ENCODE measurements at regions of chr18 and their contacts with region 1.

Region 1: DNA sequence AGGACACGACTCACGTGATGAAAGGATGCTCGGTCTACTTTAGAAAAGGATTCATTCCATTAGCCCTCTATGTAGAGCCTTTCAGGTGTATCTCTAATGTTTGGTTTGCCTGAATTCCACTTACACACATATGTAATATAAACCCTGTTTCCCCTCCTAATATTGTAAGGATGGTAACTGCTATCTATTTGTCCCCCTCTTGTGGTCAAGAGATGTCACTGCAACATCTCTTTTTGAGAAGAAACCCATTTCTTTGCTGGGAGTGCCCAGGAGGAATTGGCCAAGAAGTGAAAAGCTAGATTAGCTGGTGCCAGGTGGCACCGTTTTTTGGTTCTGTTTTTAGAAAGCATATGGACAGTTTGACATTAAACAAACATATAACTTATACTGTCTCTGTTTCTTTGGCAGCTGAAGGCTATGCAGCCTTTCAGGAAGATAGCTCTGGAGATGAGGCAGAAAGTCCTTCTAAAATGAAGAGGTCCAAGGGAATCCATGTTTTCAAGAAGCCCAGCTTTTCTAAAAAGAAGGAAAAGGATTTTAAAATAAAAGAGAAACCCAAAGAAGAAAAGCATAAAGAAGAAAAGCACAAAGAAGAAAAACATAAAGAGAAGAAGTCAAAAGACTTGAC is 41.2 kb downstream of the RALBP1 start:
- DNase-seq: peak in 1 of 2 experiments; percentile 32
- H3K4me3 ChIP-seq: no peak overlapping the region
- H3K4me3 Mint-ChIP-seq: no peak overlapping the region
- H3K27ac Mint-ChIP-seq: no peak overlapping the region
- H3K4me1 ChIP-seq: peaks cover 31% of the 10 kb centered on the region
- H3K4me1 Mint-ChIP-seq: peaks cover 15% of the 10 kb centered on the region
- H3K27me3 ChIP-seq: no peaks in the 10 kb centered on the region
- H3K27me3 Mint-ChIP-seq: no peaks in the 10 kb centered on the region
- CTCF ChIP-seq: peak; percentile 82 to 85

Region 2: GRCh38 chr18:9066817-9067306 is 449.7 kb before region 1 on chr18:
- CTCF ChIA-PET with region 1: no interaction called
- POLR2A ChIA-PET with region 1: no interaction called
- intact Hi-C with region 1: loop called (anchors 2 kb)
- DNase-seq: no peak
- H3K4me3 ChIP-seq: no peak overlapping the region
- H3K4me3 Mint-ChIP-seq: no peak overlapping the region
- H3K27ac Mint-ChIP-seq: no peak overlapping the region
- H3K4me1 ChIP-seq: no peaks in the 10 kb centered on the region; the same call in 1 of the 2 replicates
- H3K4me1 Mint-ChIP-seq: peaks cover 14% of the 10 kb centered on the region
- H3K27me3 ChIP-seq: no peaks in the 10 kb centered on the region
- H3K27me3 Mint-ChIP-seq: no peaks in the 10 kb centered on the region
- CTCF ChIP-seq: no peak

Region 3: GRCh38 chr18:9287036-9287435 is 229.5 kb before region 1 on chr18:
- CTCF ChIA-PET with region 1: no interaction called
- POLR2A ChIA-PET with region 1: interaction called, 3 read pairs
- intact Hi-C with region 1: loop called (anchors 10 kb)
- DNase-seq: no peak
- H3K4me3 ChIP-seq: no peak overlapping the region
- H3K4me3 Mint-ChIP-seq: no peak overlapping the region
- H3K27ac Mint-ChIP-seq: no peak overlapping the region
- H3K4me1 ChIP-seq: no peaks in the 10 kb centered on the region
- H3K4me1 Mint-ChIP-seq: no peaks in the 10 kb centered on the region
- H3K27me3 ChIP-seq: no peaks in the 10 kb centered on the region
- H3K27me3 Mint-ChIP-seq: no peaks in the 10 kb centered on the region
- CTCF ChIP-seq: no peak

Region 4: GRCh38 chr18:9366192-9366591 is 150.4 kb before region 1 on chr18:
- CTCF ChIA-PET with region 1: no interaction called
- POLR2A ChIA-PET with region 1: no interaction called
- intact Hi-C with region 1: loop called (anchors 10 kb)
- DNase-seq: peak in 1 of 2 experiments; percentile 15
- H3K4me3 ChIP-seq: no peak overlapping the region
- H3K4me3 Mint-ChIP-seq: no peak overlapping the region
- H3K27ac Mint-ChIP-seq: no peak overlapping the region
- H3K4me1 ChIP-seq: peaks cover 35% of the 10 kb centered on the region
- H3K4me1 Mint-ChIP-seq: peaks cover 22% of the 10 kb centered on the region
- H3K27me3 ChIP-seq: no peaks in the 10 kb centered on the region
- H3K27me3 Mint-ChIP-seq: no peaks in the 10 kb centered on the region
- CTCF ChIP-seq: no peak

Region 5: DNA sequence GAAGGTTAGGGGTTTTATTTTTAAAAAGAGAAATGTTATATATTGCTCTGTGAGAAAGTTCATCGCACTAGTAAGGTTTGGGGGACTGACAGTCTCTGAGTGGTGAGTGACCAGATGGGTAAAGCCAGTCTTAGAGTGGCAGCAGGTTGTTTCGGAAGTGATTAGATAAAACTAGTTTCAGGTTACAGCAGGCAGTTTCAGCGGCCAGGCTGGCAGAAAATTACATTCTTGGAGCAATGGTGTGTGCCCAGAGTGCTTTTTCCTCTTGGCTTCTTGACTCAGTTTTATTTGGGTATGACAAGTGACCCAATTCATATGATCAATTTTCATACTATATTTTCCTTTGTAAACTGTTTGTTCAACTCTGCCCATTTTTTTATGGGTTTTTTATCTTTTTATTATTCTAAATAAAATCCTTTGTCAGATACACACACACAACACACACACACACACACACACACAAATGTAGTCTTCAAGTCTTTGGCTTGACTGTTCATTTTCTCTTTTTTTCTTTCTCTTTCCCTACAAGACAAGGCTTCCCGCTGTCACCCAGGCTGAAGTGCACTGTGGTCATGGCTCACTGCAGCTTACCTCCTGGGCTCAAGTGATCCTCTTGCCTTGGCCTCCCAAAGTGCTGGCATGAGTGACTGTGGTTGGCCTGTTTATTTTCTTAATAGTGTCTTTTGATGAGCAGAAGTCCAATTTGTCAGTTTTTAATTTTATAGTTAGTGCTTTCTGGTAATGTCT is 10.3 kb before region 1 on chr18:
- CTCF ChIA-PET with region 1: no interaction called
- POLR2A ChIA-PET with region 1: interaction called, 6 read pairs
- intact Hi-C with region 1: loop called (anchors 1 kb)
- DNase-seq: no peak
- H3K4me3 ChIP-seq: no peak overlapping the region
- H3K4me3 Mint-ChIP-seq: no peak overlapping the region
- H3K27ac Mint-ChIP-seq: peak overlapping the region; percentile 20
- H3K4me1 ChIP-seq: no peaks in the 10 kb centered on the region
- H3K4me1 Mint-ChIP-seq: peaks cover 23% of the 10 kb centered on the region
- H3K27me3 ChIP-seq: no peaks in the 10 kb centered on the region
- H3K27me3 Mint-ChIP-seq: no peaks in the 10 kb centered on the region
- CTCF ChIP-seq: no peak

Measured in Caco-2 (cell line).